CD4-positive, alpha-beta memory T cell (primary cell): ENCODE measurements at regions of chr13 and their contacts with region 1.

Region 1: GRCh38 chr13:102779436-102780159 is 6.0 kb upstream of the TEX30 start:
- DNase-seq: peak; percentile 48 to 78 (median 54)
- H3K4me3 ChIP-seq: peak overlapping the region in 1 of 2 donors; percentile 20
- H3K4me3 Mint-ChIP-seq: peak overlapping the region; percentile 3 to 77 (median 64)
- H3K27ac ChIP-seq: peak overlapping the region; percentile 61
- H3K27ac Mint-ChIP-seq: peak overlapping the region; percentile 67 to 96 (median 88)
- H3K4me1 ChIP-seq: peaks cover 23% of the 10 kb centered on the region
- H3K4me1 Mint-ChIP-seq: peaks cover 15 to 51% (median 32%) of the 10 kb centered on the region in 4 donors
- H3K27me3 ChIP-seq: no peaks in the 10 kb centered on the region
- H3K27me3 Mint-ChIP-seq: no peaks in the 10 kb centered on the region

Region 2: GRCh38 chr13:102800145-102801041 is 20.8 kb after region 1 on chr13:
- CTCF ChIA-PET with region 1: interaction called, 6 read pairs
- POLR2A ChIA-PET with region 1: interaction called, 4 read pairs
- intact Hi-C with region 1: loop called (anchors 2 kb)
- DNase-seq: peak; percentile 75 to 83 (median 81)
- H3K4me3 ChIP-seq: peak overlapping the region; percentile 69 to 76
- H3K4me3 Mint-ChIP-seq: peak overlapping the region; percentile 87 to 95 (median 90)
- H3K27ac ChIP-seq: peak overlapping the region; percentile 46
- H3K27ac Mint-ChIP-seq: peak overlapping the region in 6 of 7 donors; percentile 43 to 86 (median 69)
- H3K4me1 ChIP-seq: peaks cover 18% of the 10 kb centered on the region
- H3K4me1 Mint-ChIP-seq: peaks cover 18 to 32% (median 21%) of the 10 kb centered on the region in 4 donors
- H3K27me3 ChIP-seq: no peaks in the 10 kb centered on the region
- H3K27me3 Mint-ChIP-seq: peaks cover 1 to 6% of the 10 kb centered on the region in 2 donors